AG04450 (cell line): ENCODE measurements at regions of chr13 and their contacts with region 1.

Region 1: DNA sequence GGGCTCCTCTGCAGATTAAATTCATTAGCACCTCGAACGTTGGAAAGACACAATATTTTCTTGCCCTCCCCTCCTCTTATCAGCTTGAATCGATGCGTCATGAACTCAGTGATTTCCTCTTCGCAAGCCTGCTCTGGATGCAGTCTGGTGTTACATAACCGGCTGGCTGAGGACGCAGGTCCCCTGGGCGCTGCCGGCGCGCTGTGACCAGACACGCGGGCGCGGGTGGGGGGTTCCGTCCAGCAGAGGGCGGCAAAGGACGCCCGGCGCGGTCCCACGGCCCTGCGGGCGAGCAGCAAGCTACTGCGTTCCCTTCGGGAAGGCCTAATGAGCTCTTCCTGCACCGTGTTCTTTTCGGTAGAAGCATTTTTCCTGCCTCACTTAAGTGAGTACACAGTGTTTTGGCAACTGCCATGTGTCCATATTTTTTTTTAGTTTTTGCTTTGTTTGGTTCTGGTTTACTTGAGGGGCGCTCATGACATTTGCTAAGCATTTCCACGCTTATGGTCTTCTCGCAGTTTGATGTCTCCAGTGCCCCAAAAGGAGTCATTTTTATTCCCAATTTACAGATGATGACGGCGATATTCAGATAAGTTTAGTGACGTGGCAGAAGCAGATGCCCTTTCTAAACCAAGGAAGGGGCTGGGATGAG is 112.2 kb upstream of the MBNL2 start:
- DNase-seq: no peak
- H3K4me3 ChIP-seq: no peak overlapping the region
- H3K27ac ChIP-seq: no peak overlapping the region
- H3K27me3 ChIP-seq: no peaks in the 10 kb centered on the region
- CTCF ChIP-seq: peak; percentile 89

Region 2: GRCh38 chr13:96810104-96810503 is 299.9 kb before region 1 on chr13:
- CTCF ChIA-PET with region 1: no interaction called
- POLR2A ChIA-PET with region 1: no interaction called
- DNase-seq: no peak
- H3K4me3 ChIP-seq: no peak overlapping the region
- H3K27ac ChIP-seq: no peak overlapping the region
- H3K27me3 ChIP-seq: no peaks in the 10 kb centered on the region
- CTCF ChIP-seq: no peak

Region 3: GRCh38 chr13:97134364-97135095 is 24.6 kb after region 1 on chr13:
- CTCF ChIA-PET with region 1: interaction called, 24 read pairs
- POLR2A ChIA-PET with region 1: no interaction called
- DNase-seq: no peak
- H3K4me3 ChIP-seq: no peak overlapping the region
- H3K27ac ChIP-seq: no peak overlapping the region
- H3K27me3 ChIP-seq: no peaks in the 10 kb centered on the region
- CTCF ChIP-seq: no peak

Region 4: DNA sequence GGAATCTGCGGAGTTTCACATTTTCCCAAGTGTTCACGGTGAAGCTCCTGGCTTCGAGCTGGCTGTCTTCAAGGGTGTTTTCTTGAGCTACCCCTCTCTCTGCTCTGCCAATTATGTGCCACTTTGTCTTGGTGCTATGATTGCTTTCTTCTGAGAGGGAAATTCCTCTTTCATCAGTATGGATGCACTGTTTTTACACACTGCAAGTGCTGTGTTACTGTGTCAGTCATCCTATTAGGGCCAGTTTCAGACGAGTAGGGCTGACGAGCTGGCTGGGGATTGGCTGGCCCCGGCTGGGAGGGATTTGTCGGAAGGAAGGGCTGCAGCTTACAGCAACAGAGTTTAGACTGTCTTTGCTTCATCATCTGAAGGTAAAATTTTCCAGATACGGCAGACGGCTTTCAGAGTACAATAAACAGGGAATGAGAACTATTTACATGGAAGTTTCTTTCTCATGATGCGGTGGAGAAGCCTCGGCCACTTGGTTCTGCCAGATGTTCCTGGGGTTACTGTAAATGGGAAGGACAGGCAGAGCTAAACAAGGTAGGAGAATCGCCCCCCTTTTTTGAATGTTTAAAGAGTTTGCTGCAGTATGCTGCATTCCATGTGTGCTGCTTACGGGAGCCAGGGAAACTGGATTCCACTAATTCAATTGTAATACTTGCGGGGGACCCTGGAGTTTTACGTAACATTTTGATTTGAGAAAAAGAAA is 112.2 kb after region 1 on chr13 and contains the start of gene MBNL2:
- CTCF ChIA-PET with region 1: interaction called, 92 read pairs
- POLR2A ChIA-PET with region 1: interaction called, 6 read pairs
- DNase-seq: peak; percentile 84
- H3K4me3 ChIP-seq: peak within 1 kb of the TSS; percentile 82
- H3K27ac ChIP-seq: peak within 1 kb of the TSS; percentile 91
- H3K27me3 ChIP-seq: no peaks in the 10 kb centered on the region
- CTCF ChIP-seq: no peak
- polyA plus RNA-seq, gene MBNL2: 42.4 and 44.0 TPM in 2 replicates

Region 5: GRCh38 chr13:97295283-97296182 is 185.6 kb after region 1 on chr13:
- CTCF ChIA-PET with region 1: interaction called, 12 read pairs
- POLR2A ChIA-PET with region 1: no interaction called
- DNase-seq: peak; percentile 26
- H3K4me3 ChIP-seq: no peak overlapping the region
- H3K27ac ChIP-seq: peak overlapping the region; percentile 81
- H3K27me3 ChIP-seq: no peaks in the 10 kb centered on the region
- CTCF ChIP-seq: no peak

Region 6: DNA sequence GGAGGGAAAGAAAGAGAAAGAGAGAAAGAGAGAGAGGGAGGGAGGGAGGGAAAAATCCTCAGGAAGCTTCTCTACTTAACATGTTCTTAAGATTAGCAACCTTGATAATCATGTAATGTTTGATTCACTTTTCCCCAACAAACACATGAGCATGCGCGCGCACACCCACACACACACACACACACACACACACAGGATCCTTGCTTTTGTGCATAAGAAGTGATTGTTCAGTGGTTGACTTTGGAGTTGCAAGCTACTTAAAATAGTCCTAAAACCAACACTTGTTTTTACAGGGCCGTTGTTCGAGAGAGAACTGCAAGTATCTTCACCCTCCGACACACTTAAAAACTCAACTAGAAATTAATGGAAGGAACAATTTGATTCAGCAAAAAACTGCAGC is 224.0 kb after region 1 on chr13:
- CTCF ChIA-PET with region 1: interaction called, 12 read pairs
- POLR2A ChIA-PET with region 1: no interaction called
- DNase-seq: no peak
- H3K4me3 ChIP-seq: no peak overlapping the region
- H3K27ac ChIP-seq: no peak overlapping the region
- H3K27me3 ChIP-seq: no peaks in the 10 kb centered on the region
- CTCF ChIP-seq: no peak

Region 7: DNA sequence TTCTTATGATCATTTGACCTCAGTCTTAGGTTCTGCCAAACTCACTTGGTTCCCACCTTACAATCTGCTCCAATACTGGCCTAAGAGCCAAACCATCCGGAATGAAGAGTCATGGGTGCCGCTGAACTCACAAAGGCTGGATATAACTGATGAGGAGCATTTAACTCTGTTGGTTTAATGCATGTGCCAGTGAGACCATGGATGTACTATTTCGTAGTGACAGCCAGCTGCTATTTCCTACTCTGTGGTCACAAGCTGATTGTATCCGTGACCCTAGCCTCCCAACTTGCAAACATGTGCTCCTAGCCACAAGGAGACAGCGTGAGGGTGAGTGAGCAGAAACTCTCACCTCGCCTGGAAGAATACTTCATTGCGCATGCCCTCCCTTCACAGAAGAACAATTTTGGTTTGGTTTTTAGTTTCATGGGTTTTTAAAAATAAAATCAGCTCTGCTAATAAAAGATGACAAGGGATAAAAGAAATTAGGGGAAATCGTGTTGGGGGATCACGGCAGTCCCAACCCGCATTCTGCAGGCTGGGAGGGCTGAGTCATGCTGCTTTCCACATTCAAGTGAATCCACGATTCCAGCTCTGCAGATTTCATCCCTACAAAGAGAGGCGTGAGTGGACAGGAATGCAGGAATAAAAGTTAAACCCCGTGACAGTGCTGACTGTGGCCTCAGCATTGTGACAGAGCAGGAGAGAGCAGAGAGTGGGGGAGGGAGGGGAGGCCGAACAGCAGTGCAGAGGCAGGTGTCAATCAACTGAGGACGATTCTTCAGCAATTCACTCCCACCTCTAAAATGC is 257.3 kb after region 1 on chr13:
- CTCF ChIA-PET with region 1: interaction called, 84 read pairs
- POLR2A ChIA-PET with region 1: no interaction called
- DNase-seq: peak; percentile 24
- H3K4me3 ChIP-seq: no peak overlapping the region
- H3K27ac ChIP-seq: peak overlapping the region; percentile 54
- H3K27me3 ChIP-seq: no peaks in the 10 kb centered on the region
- CTCF ChIP-seq: no peak